HCT116 (cell line): ENCODE measurements at regions of chr14 and their contacts with region 1.

Region 1: DNA sequence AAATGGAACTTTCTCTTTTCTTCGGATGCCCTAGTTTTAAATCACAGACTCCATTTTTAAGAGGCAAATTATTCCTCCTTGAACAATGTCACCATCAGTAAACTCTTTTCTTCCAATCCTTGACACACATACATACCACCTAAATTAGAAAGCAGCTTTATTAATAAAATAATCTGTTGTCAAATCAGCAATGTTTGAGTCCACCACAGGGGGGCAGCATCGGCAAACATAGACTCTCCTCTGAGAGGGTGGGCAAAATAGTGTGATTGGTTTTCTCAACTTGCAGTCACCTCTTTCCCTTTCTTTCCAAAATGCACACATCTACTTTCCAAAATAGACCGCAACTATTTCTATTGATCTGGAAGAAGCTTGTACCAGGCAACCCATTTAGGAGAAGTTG is 438.4 kb upstream of the OR4E1 start:
- DNase-seq: no peak
- ATAC-seq: no peak; the same call in 1 of the 2 replicates
- H3K4me3 ChIP-seq: no peak overlapping the region
- H3K27ac ChIP-seq: no peak overlapping the region
- H3K4me1 ChIP-seq: no peaks in the 10 kb centered on the region
- H3K27me3 ChIP-seq: peaks cover 17% of the 10 kb centered on the region; the same call in 1 of the 2 replicates
- CTCF ChIP-seq: peak; percentile 11 to 84 (median 65); a peak in 4 of 6 replicates
- POLR2A ChIP-seq: no peak
- RAD21 ChIP-seq: peak; percentile 25; the same call in 1 of the 2 replicates

Region 2: GRCh38 chr14:22122227-22122818 is 10.3 kb after region 1 on chr14:
- CTCF ChIA-PET with region 1: interaction called, 15 read pairs
- POLR2A ChIA-PET with region 1: no interaction called
- RAD21 ChIA-PET with region 1: interaction called in 1 of 2 experiments, 3 read pairs
- intact Hi-C with region 1: no loop called
- DNase-seq: no peak
- ATAC-seq: no peak
- H3K4me3 ChIP-seq: no peak overlapping the region
- H3K27ac ChIP-seq: no peak overlapping the region
- H3K4me1 ChIP-seq: no peaks in the 10 kb centered on the region
- H3K27me3 ChIP-seq: peaks cover 27% of the 10 kb centered on the region
- CTCF ChIP-seq: peak in 2 of 3 experiments; percentile 19 to 28; a peak in 3 of 6 replicates
- POLR2A ChIP-seq: no peak
- RAD21 ChIP-seq: 0 out of 2 replicates have a peak, but pooled peaks have one; percentile 10

Region 3: GRCh38 chr14:22945642-22946041 is 833.6 kb after region 1 on chr14:
- CTCF ChIA-PET with region 1: no interaction called
- POLR2A ChIA-PET with region 1: no interaction called
- RAD21 ChIA-PET with region 1: no interaction called
- intact Hi-C with region 1: no loop called
- DNase-seq: no peak
- ATAC-seq: 0 out of 2 replicates have a peak, but pooled peaks have one; percentile 3
- H3K4me3 ChIP-seq: no peak overlapping the region
- H3K27ac ChIP-seq: no peak overlapping the region
- H3K4me1 ChIP-seq: peaks cover 7 to 12% of the 10 kb centered on the region in 2 experiments; a peak in 3 of 4 replicates
- H3K27me3 ChIP-seq: no peaks in the 10 kb centered on the region
- CTCF ChIP-seq: no peak
- POLR2A ChIP-seq: no peak
- RAD21 ChIP-seq: no peak